Sigmoid colon (tissue), 7 donors: ENCODE measurements at regions of chr4 and their contacts with region 1.

Region 1: DNA sequence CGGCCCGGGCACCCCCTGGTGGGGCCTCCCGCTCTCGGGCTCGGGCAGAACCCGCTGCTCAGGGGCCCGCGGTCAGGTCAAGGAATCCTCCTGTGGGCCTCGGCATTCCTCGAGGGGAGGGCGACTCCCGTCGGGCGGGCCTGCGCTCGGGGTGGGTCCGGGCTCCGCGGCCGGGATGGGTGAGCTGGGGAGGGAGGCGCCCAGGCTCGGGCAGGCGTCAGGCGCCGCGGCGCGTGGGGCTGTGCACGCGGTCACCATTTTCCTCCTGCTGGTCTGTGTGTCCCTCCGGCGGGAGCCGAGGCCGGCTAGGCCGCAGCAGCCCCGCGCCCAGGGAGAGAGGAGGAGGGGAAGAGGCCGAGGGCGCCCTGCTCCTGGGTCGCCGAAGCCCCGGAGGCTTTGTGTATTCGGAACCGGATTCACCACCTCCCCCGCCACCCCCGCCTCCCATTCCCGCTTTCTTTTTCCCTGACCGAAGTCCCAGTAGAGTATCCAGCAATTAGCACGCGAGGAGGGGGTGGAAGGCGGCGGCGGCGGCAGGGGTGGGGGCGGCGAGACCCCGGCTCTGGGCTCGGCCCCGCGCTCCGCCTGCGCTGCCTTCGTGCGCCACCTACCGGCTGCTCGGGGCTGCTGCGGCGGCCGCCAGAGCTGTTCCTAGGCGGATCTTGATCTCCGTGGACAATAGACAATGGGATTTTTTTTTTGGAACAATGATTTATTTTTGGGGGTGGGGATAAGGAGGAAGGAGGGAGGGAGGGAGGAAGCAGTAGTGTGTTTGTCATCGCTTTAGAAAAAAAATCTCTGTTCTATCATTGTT is 99.0 kb upstream of the MAML3 start:
- DNase-seq: peak; percentile 85
- H3K4me3 ChIP-seq: peak overlapping the region; percentile 38 to 66 (median 64)
- H3K27ac ChIP-seq: peak overlapping the region; percentile 88 to 93 (median 92)
- H3K4me1 ChIP-seq: peaks cover 0 to 50% (median 46%) of the 10 kb centered on the region in 4 donors
- H3K27me3 ChIP-seq: no peaks in the 10 kb centered on the region
- CTCF ChIP-seq: peak; percentile 51 to 98 (median 68)
- EP300 ChIP-seq: no peak
- POLR2A ChIP-seq: no peak

Region 2: GRCh38 chr4:139656614-139657486 is 596.1 kb before region 1 on chr4:
- intact Hi-C with region 1: loop called (anchors 5 kb)
- DNase-seq: peak; percentile 80
- H3K4me3 ChIP-seq: no peak overlapping the region
- H3K27ac ChIP-seq: peak overlapping the region in 2 of 4 donors; percentile 39 to 58
- H3K4me1 ChIP-seq: peaks cover 0 to 10% (median 0%) of the 10 kb centered on the region in 4 donors
- H3K27me3 ChIP-seq: no peaks in the 10 kb centered on the region
- CTCF ChIP-seq: peak; percentile 67 to 74 (median 72)
- EP300 ChIP-seq: no peak
- POLR2A ChIP-seq: no peak

Region 3: DNA sequence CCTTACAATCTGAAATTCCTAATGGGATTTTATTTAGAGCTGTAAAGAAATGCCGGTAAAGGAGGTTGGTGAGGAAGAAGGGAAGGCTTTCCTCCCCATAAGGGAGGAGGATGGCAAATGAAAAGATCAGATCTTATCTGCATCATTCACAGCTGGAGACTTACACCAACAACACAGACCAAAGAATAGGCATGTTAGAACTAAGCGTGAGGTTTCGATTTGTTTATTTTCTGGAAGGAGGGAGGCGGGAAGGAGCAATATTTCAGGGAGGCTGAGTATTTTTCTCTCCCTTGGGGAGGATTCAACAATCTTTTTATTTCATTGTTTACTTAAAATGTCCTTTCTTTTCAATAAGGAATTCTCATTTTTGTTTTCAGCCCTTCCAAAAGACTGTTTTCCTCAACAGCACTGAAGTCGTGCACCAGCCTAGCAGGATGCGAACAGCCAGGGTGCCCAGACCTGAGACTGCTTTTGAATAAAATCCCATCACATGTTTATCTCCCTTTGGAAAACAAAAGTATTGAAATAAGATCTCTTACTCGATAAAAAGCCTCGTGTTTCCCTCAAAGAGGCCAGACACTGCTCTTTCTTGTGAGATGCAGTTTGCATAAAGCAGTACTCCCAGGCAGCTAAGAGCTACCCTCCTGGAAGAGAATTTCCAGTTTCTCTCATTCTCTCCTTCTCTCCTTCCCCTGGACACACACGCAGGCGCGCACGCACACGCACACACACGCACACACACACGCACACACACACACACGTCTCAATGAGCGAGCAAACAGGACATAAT is 351.2 kb before region 1 on chr4:
- intact Hi-C with region 1: loop called (anchors 5 kb)
- DNase-seq: no peak
- H3K4me3 ChIP-seq: peak overlapping the region; percentile 22 to 49 (median 44)
- H3K27ac ChIP-seq: peak overlapping the region; percentile 42 to 68 (median 60)
- H3K4me1 ChIP-seq: peaks cover 0 to 18% (median 3%) of the 10 kb centered on the region in 4 donors
- H3K27me3 ChIP-seq: no peaks in the 10 kb centered on the region
- CTCF ChIP-seq: no peak
- EP300 ChIP-seq: no peak
- POLR2A ChIP-seq: no peak

Region 4: DNA sequence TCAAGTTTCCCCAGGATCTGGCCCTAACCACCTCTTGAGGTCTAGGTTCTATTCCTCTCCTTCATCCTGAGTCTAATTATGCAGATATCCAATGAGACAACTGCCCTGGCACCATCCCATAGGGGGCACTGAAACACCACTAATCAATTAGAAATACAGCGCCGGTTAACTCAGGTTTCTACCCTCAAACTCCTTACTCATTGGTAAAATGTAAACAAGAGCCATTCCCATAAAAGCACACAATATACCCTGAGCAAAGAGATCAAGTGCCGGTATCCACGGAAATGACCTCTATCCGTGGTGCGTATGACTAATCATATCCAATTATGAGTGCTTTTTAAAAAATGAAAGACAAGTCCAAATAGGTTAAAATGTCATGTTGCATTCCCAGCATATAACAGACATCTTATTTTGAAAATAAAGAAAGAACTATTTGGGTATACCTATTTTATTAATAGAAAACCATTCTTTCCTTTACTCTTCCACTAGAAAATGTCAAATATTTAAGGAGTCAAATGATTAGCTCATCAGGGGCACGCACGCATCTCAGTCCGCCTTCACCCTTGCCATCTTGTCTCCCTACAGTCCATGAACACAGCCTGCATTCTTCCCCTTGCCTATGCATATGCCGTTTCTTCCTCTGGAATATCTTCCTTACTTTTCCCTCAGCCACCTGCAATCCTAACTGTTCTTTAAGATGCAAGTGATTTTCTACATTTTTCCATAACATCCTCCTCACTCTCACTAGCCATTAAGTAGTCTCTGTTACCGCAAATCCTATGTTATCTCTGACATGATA is 240.1 kb before region 1 on chr4:
- intact Hi-C with region 1: loop called (anchors 2 kb)
- DNase-seq: peak; percentile 69
- H3K4me3 ChIP-seq: no peak overlapping the region
- H3K27ac ChIP-seq: no peak overlapping the region
- H3K4me1 ChIP-seq: peaks cover 0 to 9% (median 6%) of the 10 kb centered on the region in 4 donors
- H3K27me3 ChIP-seq: no peaks in the 10 kb centered on the region
- CTCF ChIP-seq: peak in 2 of 4 experiments; percentile 43 to 52
- EP300 ChIP-seq: no peak
- POLR2A ChIP-seq: no peak

Region 5: DNA sequence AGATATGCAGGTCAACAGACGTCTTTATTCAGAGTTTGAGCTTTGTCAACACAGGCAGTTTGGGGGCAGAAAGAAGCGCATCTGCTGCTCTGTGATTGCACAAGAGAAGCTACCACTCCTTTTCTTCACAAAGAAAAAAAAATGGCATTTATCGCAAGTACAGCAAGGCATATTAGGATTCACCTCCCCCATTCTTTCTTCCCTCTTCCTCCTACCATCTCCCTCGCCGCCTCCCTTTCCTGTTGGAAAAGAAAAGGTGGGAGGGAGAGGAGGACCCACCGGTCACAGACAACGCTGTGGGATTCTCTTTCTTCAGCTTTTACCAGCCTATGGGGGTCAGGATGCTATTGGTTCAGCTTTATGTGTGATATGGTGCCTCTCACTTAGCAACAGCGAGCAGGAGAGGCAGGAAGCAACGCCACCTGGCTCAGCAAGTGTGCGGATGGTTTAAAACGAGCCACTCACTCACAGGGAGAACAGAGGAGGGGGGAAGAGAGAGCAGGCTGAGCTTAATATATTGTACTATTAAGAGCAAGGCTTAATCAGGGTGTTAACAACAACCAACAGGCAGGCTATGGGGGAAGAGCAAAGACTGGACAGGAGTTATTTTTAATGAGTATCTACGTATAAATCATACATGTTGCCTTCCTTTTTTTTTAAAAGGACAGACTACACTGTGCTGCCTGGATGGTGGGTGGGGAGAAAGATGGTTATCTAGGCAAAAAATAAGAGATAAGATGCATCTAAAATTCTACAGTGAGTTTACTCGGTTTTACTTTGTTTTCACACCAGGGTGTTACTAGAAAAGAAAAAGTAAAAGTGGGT is 203.7 kb before region 1 on chr4:
- intact Hi-C with region 1: loop called (anchors 2 kb)
- DNase-seq: peak; percentile 72
- H3K4me3 ChIP-seq: peak overlapping the region; percentile 17 to 50 (median 44)
- H3K27ac ChIP-seq: peak overlapping the region; percentile 67 to 77 (median 72)
- H3K4me1 ChIP-seq: peaks cover 0 to 24% (median 23%) of the 10 kb centered on the region in 4 donors
- H3K27me3 ChIP-seq: no peaks in the 10 kb centered on the region
- CTCF ChIP-seq: no peak
- EP300 ChIP-seq: no peak
- POLR2A ChIP-seq: no peak

Region 6: DNA sequence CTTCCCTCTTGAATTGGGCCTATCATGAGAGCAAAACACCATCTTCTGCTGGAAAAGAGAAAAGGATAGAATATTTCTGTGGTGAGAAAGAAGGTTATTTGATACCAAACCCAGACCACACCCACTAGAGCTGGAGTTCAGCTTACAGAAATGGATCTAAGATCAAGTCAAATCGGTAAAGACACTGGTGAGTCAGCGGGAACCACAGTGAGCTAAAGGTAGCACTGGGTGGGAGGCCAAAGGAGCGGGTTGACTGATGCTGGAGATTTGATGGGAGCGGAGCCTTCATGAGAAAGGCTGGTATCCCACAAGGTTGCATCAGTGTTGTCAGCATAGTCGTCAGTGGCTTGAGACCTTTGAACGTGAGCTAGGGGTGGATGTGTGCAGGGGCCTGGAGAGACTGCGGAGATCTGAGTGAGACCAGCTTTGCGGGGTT is 14.1 kb after region 1 on chr4:
- intact Hi-C with region 1: no loop called
- DNase-seq: no peak
- H3K4me3 ChIP-seq: no peak overlapping the region
- H3K27ac ChIP-seq: no peak overlapping the region
- H3K4me1 ChIP-seq: no peaks in the 10 kb centered on the region
- H3K27me3 ChIP-seq: no peaks in the 10 kb centered on the region
- CTCF ChIP-seq: no peak
- EP300 ChIP-seq: no peak
- POLR2A ChIP-seq: no peak

Region 7: GRCh38 chr4:140308366-140309123 is 55.6 kb after region 1 on chr4:
- intact Hi-C with region 1: loop called (anchors 5 kb)
- DNase-seq: peak; percentile 84
- H3K4me3 ChIP-seq: no peak overlapping the region
- H3K27ac ChIP-seq: peak overlapping the region; percentile 70 to 87 (median 74)
- H3K4me1 ChIP-seq: peaks cover 0 to 18% (median 15%) of the 10 kb centered on the region in 4 donors
- H3K27me3 ChIP-seq: no peaks in the 10 kb centered on the region
- CTCF ChIP-seq: no peak
- EP300 ChIP-seq: peak in 3 of 4 donors; percentile 36 to 94 (median 42)
- POLR2A ChIP-seq: no peak

Region 8: DNA sequence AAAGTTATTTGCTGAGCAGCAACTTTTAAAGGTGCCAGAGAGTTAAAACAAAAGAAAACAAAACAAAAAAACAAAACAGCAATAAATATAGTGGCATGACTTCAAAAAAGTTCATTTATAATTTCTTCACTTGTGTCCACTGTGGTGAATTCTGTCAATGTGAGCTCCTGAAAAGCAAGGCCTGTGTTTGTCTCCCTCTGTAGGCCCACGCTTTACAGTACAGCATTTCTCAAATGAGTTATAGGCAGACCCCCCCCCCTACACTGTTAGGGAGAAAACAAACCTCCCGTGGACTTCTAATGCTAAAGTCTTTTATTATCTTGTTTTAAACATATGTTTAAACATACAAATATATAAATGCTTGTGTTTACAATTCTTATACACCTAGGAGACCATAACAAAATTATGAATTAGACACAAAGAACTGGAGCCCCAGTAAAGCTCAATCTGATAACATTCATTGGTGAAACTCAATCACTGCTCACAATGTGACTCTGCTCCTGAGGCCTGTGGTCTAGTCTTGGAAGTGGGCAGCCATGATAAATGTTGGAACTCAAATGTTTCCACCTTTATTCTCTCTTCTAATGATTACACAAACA is 73.5 kb after region 1 on chr4:
- intact Hi-C with region 1: loop called (anchors 5 kb)
- DNase-seq: no peak
- H3K4me3 ChIP-seq: no peak overlapping the region
- H3K27ac ChIP-seq: no peak overlapping the region
- H3K4me1 ChIP-seq: no peaks in the 10 kb centered on the region
- H3K27me3 ChIP-seq: no peaks in the 10 kb centered on the region
- CTCF ChIP-seq: peak; percentile 61 to 68 (median 64)
- EP300 ChIP-seq: no peak
- POLR2A ChIP-seq: no peak

Region 9: DNA sequence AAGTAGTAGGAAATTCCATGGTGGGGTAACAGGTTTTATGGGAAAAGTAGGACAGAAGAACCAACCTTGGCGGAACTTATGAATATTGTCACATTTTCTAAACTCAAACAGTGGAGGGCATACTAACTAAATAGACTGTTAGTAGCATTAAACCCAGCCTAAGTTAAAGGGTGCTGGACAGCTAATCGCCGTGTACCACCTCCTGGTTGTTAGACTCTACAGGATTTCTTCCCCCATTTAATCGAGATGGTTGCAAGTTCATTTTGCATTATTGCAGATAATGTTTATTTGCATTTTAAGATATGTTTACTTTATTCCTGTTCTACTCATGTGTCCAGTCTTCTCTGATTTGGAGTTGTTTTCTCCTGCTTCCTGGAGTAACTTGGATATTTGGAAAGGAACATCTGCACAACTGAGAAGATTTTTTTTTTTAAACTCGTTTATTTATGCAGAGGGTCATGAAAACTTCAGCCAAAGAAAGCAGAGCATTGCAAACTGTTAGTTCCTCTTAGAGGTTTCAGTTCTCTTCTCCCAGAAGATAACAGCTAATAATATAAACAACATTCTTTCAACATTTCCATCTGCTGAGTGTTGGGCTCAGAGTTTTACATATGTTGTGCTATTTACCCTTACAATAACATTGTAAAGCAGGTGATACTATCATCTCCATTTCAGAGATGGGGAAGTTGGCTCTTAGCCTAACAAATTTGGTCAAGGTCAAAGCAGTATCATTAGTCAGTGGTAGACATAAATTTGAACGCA is 554.7 kb after region 1 on chr4:
- intact Hi-C with region 1: no loop called
- DNase-seq: no peak
- H3K4me3 ChIP-seq: no peak overlapping the region
- H3K27ac ChIP-seq: peak overlapping the region in 2 of 4 donors; percentile 14 to 25
- H3K4me1 ChIP-seq: peaks cover 0 to 15% (median 5%) of the 10 kb centered on the region in 4 donors
- H3K27me3 ChIP-seq: no peaks in the 10 kb centered on the region
- CTCF ChIP-seq: no peak
- EP300 ChIP-seq: no peak
- POLR2A ChIP-seq: no peak